GM10248 (cell line): ENCODE measurements at regions of chr4 and their contacts with region 1.

Region 1: GRCh38 chr4:40046311-40046980 is 10.2 kb upstream of the N4BP2 start:
- DNase-seq: peak; percentile 31
- CTCF ChIP-seq: no peak

Region 2: GRCh38 chr4:39446751-39447573 is 599.5 kb before region 1 on chr4:
- CTCF ChIA-PET with region 1: no interaction called
- POLR2A ChIA-PET with region 1: no interaction called
- DNase-seq: peak; percentile 79
- CTCF ChIP-seq: peak; percentile 43

Region 3: DNA sequence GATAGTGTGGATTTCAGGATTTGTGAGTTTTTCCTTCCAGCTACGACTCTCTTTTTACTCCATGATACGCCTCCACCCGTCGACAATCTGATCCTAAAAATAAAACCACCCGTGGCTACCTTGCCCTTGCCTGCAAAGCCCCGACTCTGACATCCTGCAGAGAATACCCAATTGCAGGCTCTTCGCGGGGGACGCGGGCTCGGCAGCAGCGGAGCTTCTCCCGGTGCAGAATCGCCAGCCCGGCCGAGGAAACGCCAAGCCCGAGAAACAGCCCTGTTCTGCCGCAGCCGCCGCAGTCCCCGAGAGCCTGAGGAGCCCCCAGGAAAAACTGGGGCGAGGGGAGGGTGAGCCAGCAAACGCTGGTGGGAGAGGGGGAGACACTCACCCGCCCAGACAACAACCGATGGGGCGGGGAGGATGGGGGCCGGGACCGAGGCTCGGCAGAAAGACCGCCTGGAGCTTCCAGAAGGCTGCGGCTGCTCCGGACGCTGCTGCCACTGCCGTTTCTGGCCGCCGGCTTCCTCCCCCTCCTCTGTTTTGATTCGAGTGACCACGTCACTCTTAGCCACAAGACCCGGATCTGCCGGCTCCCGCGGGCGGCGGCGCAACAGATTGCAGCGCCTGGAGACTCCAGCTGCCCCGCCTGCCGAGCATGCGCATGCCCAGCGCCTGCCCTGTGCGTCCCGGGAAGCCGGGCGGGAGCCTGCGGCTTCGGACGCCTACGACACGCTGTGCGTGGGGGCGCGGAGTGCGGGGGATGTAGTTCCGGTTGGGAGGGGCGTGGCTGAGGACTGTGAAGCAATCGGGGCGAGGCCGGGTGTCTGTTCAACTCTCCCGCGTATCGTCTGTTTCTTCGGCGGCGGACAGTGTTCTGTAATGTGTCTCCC is 407.8 kb before region 1 on chr4 and contains the start of gene SMIM14:
- CTCF ChIA-PET with region 1: no interaction called
- POLR2A ChIA-PET with region 1: no interaction called
- DNase-seq: peak; percentile 90
- CTCF ChIP-seq: no peak

Region 4: GRCh38 chr4:40056716-40057585 is 10.5 kb after region 1 on chr4 and contains the start of gene N4BP2:
- CTCF ChIA-PET with region 1: interaction called, 17 read pairs
- POLR2A ChIA-PET with region 1: no interaction called
- DNase-seq: peak; percentile 82
- CTCF ChIP-seq: peak; percentile 84

Region 5: GRCh38 chr4:40395908-40396793 is 349.7 kb after region 1 on chr4:
- CTCF ChIA-PET with region 1: no interaction called
- POLR2A ChIA-PET with region 1: no interaction called
- DNase-seq: no peak
- CTCF ChIP-seq: no peak